Activated T-helper 1 cell treated with anti-CD3 and anti-CD28 coated beads, Interleukin-12 subunit alpha, Interleukin-12 subunit beta, Interleukin-2, Interleukin-4 antibody, amounts not matched to agents 30 ng/mL and 10 ng/mL and 1 ng/mL, durations not matched to agents 14 hours and 24 hours and 36 hours (primary cell): ENCODE measurements at regions of chr22 and their contacts with region 1.

Region 1: GRCh38 chr22:41957941-41958556 is 6.1 kb downstream of the SMIM45 start:
- DNase-seq: no peak
- H3K4me3 Mint-ChIP-seq: no peak overlapping the region
- H3K27ac Mint-ChIP-seq: peak overlapping the region; percentile 8
- H3K4me1 Mint-ChIP-seq: peaks cover 5% of the 10 kb centered on the region
- H3K27me3 Mint-ChIP-seq: peaks cover 4% of the 10 kb centered on the region

Region 2: GRCh38 chr22:41746567-41747400 is 211.3 kb before region 1 on chr22:
- intact Hi-C with region 1: loop called (anchors 1 kb)
- DNase-seq: peak; percentile 42
- H3K4me3 Mint-ChIP-seq: no peak overlapping the region
- H3K27ac Mint-ChIP-seq: no peak overlapping the region
- H3K4me1 Mint-ChIP-seq: peaks cover 8% of the 10 kb centered on the region
- H3K27me3 Mint-ChIP-seq: peaks cover 41% of the 10 kb centered on the region

Region 3: DNA sequence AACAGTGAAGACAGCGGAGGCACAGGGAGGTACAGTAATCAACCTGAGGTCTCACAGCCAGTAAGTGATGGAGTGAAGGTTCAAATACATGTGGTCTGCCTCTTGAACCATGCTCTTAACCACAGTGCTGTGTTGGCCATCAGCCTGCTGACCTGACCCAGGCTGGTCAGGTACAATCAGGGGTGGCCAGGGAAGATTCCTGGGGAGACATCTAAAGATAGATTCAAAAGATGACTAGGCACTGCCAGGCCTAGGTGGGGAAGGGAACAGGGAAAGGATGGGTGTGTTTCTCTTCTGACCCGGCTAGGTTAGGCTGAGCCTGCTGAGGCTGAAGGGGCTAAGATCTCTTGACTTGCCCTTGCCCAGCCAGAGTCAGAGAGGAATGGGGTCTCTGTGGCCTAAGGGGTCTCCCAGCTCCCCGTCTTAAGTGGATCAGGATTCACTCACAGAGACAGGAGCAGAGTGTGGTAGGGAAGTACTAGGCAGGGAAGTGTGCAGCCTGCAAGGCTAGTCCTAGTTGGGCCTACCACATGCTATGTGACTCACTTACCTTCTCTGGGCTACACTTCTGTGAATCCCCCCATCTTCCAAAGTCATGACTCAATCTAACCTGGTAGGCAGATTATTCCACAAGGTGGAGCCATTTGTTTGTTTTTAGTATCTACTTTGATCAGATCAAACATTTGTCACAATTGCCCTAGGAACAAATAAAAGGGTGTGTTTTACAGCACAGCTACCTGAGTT is 135.6 kb before region 1 on chr22:
- intact Hi-C with region 1: loop called (anchors 1 kb)
- DNase-seq: peak; percentile 23
- H3K4me3 Mint-ChIP-seq: no peak overlapping the region
- H3K27ac Mint-ChIP-seq: peak overlapping the region; percentile 82
- H3K4me1 Mint-ChIP-seq: peaks cover 36% of the 10 kb centered on the region
- H3K27me3 Mint-ChIP-seq: no peaks in the 10 kb centered on the region

Region 4: GRCh38 chr22:41888627-41889200 is 69.3 kb before region 1 on chr22:
- intact Hi-C with region 1: no loop called
- DNase-seq: no peak
- H3K4me3 Mint-ChIP-seq: no peak overlapping the region
- H3K27ac Mint-ChIP-seq: no peak overlapping the region
- H3K4me1 Mint-ChIP-seq: no peaks in the 10 kb centered on the region
- H3K27me3 Mint-ChIP-seq: no peaks in the 10 kb centered on the region

Region 5: DNA sequence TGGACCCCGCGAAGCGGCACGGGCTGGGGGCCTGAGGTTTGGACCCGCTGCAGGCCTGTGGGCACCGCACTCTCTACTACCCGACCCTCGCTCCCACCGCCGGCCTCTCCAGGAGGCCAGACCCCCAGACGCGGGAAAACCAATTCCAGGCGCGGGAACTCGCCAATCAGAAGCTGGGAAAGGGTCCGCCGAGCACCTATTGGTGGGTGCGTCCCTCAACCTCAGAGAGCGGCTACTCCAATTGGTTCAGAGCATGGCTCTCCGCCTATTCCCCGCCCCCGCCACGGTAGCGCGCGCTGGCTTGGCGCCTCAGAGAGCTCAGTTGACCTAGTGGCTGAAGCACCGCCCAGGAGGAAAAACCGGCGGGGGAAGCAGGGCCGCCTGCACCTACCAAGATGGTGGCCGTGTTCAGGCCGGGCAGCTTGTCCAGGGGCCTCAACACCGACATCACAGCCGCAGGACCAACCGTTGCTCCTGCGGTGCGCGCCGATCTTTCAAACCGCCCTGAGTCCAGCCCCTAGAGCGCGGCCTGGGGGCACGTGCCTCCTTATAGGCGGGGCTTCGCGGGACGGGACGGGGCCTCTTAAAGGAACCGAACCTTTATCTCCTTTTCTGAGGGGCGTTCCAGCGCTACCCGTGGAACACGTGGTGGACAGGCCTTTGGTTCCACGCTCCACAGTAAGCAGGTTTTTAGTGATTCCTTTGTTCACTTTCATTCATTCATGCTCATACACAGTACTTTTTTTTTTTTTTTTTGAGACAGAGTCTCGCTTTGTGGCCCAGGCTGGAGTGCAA is 11.2 kb before region 1 on chr22 and contains the start of gene CENPM:
- intact Hi-C with region 1: loop called (anchors 1 kb)
- DNase-seq: peak; percentile 93
- H3K4me3 Mint-ChIP-seq: peak within 1 kb of the TSS; percentile 92
- H3K27ac Mint-ChIP-seq: peak within 1 kb of the TSS; percentile 93
- H3K4me1 Mint-ChIP-seq: peaks cover 47% of the 10 kb centered on the region
- H3K27me3 Mint-ChIP-seq: no peaks in the 10 kb centered on the region
- total RNA-seq, gene CENPM: 82.0 and 84.6 TPM in 2 replicates